Activated CD8-positive, alpha-beta memory T cell treated with anti-CD3 and anti-CD28 coated beads, Interleukin-2, amount 10 ng/mL, durations not matched to agents 7 days and 5 days (primary cell): ENCODE measurements at regions of chr19 and their contacts with region 1.

Region 1: DNA sequence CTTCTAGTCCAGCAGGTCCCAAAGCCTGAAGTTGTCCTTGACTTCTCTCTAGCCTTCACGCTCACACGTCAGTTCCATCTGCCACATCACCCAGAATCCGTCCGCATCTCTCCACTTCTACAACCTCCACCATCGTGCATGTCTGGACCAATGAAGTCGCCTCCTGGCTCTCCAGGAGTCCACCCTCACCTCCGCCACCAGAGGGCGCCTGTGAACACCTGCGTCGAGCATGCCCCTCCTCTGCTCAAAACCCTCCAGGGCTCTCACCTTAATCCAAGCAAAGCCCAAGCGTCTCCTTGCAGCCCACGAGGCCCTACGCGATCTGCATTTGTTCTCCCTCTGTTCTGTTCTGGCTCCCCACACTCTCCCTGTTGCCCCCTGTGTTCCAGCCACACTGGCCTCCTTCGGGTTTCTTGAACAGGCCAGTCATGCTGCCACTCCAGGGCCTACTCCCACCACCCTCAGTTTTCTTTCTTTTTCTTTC is 3.7 kb downstream of the USHBP1 start:
- DNase-seq: peak; percentile 94
- ATAC-seq: peak; percentile 100
- H3K4me3 Mint-ChIP-seq: no peak overlapping the region
- H3K27ac Mint-ChIP-seq: no peak overlapping the region
- H3K4me1 Mint-ChIP-seq: peaks cover 13% of the 10 kb centered on the region
- H3K27me3 Mint-ChIP-seq: no peaks in the 10 kb centered on the region

Region 2: DNA sequence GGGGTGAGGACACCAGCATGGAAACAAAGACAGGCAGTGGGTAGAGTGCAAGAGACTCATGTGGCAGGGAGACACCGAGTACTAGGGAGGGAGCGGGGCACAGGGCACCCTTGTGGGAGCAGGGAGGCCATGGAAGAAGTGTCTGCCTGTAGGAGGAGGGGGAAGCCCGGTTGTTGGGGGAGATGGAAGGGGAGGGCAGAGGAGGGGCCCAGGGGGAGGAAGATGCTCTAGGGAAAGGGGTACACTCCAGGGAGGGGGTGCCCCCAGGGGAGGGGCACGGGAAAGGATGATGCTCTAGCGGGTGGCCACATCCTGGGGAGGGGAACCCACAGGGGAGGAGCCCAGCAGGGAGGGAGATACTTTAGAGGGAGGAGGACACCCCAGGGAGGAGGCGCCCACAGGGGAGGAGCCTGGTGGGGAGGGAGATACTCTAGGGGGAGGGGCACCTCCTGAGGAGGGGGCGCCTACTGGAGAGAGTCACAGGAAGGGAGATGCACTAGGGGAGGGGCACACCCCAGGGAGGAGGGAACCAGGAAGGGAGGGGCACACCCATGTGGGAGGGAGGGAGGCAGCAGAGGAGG is 259.2 kb before region 1 on chr19:
- CTCF ChIA-PET with region 1: no interaction called
- DNase-seq: peak; percentile 85
- ATAC-seq: peak; percentile 89
- H3K4me3 Mint-ChIP-seq: peak overlapping the region; percentile 2
- H3K27ac Mint-ChIP-seq: peak overlapping the region; percentile 74
- H3K4me1 Mint-ChIP-seq: peaks cover 9% of the 10 kb centered on the region
- H3K27me3 Mint-ChIP-seq: no peaks in the 10 kb centered on the region

Region 3: GRCh38 chr19:17069218-17069617 is 191.7 kb before region 1 on chr19:
- CTCF ChIA-PET with region 1: interaction called, 10 read pairs
- DNase-seq: no peak
- ATAC-seq: no peak
- H3K4me3 Mint-ChIP-seq: no peak overlapping the region
- H3K27ac Mint-ChIP-seq: no peak overlapping the region
- H3K4me1 Mint-ChIP-seq: peaks cover 46% of the 10 kb centered on the region
- H3K27me3 Mint-ChIP-seq: no peaks in the 10 kb centered on the region

Region 4: GRCh38 chr19:17170538-17171297 is 90.2 kb before region 1 on chr19:
- CTCF ChIA-PET with region 1: no interaction called
- DNase-seq: no peak
- ATAC-seq: peak; percentile 45
- H3K4me3 Mint-ChIP-seq: no peak overlapping the region
- H3K27ac Mint-ChIP-seq: peak overlapping the region; percentile 43
- H3K4me1 Mint-ChIP-seq: peaks cover 12% of the 10 kb centered on the region
- H3K27me3 Mint-ChIP-seq: no peaks in the 10 kb centered on the region

Region 5: GRCh38 chr19:17243990-17244385 is 16.9 kb before region 1 on chr19:
- CTCF ChIA-PET with region 1: interaction called, 23 read pairs
- DNase-seq: no peak
- ATAC-seq: no peak
- H3K4me3 Mint-ChIP-seq: no peak overlapping the region
- H3K27ac Mint-ChIP-seq: no peak overlapping the region
- H3K4me1 Mint-ChIP-seq: peaks cover 7% of the 10 kb centered on the region
- H3K27me3 Mint-ChIP-seq: peaks cover 22% of the 10 kb centered on the region

Region 6: DNA sequence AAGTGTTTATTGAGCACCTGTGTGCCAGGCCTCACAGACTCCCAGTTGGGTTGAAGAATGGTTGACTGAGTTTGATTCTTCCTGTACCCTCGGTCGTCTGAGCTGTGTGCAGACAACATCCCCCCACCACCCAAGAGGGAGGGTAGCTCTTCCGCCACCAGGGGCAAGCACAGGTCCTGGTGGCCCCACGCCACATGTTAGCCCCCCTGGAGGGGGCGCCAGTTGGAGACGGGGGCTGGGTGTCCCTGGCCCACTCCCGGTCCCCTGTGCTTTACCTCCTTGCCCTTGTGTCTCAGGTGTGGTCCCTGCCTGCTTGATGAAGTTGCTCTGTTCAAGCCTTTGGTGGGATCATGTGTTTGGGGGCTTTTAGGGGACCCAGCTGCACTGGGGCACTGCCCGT is 321.7 kb after region 1 on chr19:
- CTCF ChIA-PET with region 1: no interaction called
- DNase-seq: no peak
- ATAC-seq: no peak
- H3K4me3 Mint-ChIP-seq: no peak overlapping the region
- H3K27ac Mint-ChIP-seq: no peak overlapping the region
- H3K4me1 Mint-ChIP-seq: peaks cover 2% of the 10 kb centered on the region
- H3K27me3 Mint-ChIP-seq: no peaks in the 10 kb centered on the region